Adrenal gland (tissue), 19 donors: ENCODE measurements at regions of chr10 and their contacts with region 1.

Region 1: DNA sequence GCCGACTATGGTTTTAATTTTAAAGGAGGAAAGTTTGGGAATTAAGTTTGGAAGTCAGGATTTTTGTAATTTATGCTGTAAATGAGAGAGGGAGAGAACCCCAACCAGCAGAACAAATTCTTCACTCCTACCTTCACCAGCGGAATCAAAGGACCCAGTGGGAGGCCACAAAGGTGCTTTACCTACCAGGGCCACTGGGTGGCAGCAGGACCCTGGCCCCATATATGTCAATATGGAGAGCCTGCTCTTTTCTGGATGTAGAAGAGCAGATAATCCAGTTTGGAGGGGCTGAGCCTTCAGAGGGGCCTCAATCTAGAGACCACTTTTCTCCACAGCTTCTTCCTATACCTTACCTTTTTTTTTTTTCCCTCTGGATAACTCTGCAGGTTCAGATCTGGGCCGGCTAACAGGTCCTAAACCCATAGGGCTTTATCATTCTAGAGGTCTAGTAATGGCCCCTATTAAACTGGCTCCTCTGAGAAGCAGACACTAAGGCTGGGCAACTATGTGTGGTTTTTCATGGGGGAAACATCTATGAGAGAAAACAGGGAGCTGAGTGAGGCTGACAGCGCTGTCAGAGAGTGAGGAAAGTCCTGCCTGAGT is 8.5 kb upstream of the SCD start:
- DNase-seq: peak; percentile 72 to 92 (median 85)
- H3K4me3 ChIP-seq: no peak overlapping the region
- H3K27ac ChIP-seq: no peak overlapping the region
- H3K4me1 ChIP-seq: peaks cover 0 to 9% of the 10 kb centered on the region in 2 donors
- H3K27me3 ChIP-seq: no peaks in the 10 kb centered on the region
- CTCF ChIP-seq: peak; percentile 82 to 95 (median 92)
- POLR2A ChIP-seq: no peak

Region 2: GRCh38 chr10:100130831-100131230 is 207.7 kb before region 1 on chr10:
- intact Hi-C with region 1: no loop called
- DNase-seq: no peak
- H3K4me3 ChIP-seq: no peak overlapping the region
- H3K27ac ChIP-seq: no peak overlapping the region
- H3K4me1 ChIP-seq: no peaks in the 10 kb centered on the region
- H3K27me3 ChIP-seq: no peaks in the 10 kb centered on the region
- CTCF ChIP-seq: no peak
- POLR2A ChIP-seq: no peak

Region 3: GRCh38 chr10:100518761-100519241 is 180.3 kb after region 1 on chr10:
- intact Hi-C with region 1: loop called (anchors 5 to 10 kb)
- DNase-seq: peak; percentile 55 to 91 (median 76)
- H3K4me3 ChIP-seq: peak overlapping the region in 1 of 4 donors; percentile 48
- H3K27ac ChIP-seq: no peak overlapping the region
- H3K4me1 ChIP-seq: peaks cover 0 to 13% of the 10 kb centered on the region in 2 donors
- H3K27me3 ChIP-seq: no peaks in the 10 kb centered on the region
- CTCF ChIP-seq: peak; percentile 48 to 78 (median 74)
- POLR2A ChIP-seq: no peak

Region 4: GRCh38 chr10:100529475-100530298 is 191.2 kb after region 1 on chr10 and contains the start of gene NDUFB8:
- intact Hi-C with region 1: loop called in 1 of 2 experiments (anchors 10 kb)
- DNase-seq: peak; percentile 89 to 96 (median 91)
- H3K4me3 ChIP-seq: peak within 1 kb of the TSS; percentile 58 to 87 (median 82)
- H3K27ac ChIP-seq: peak within 1 kb of the TSS in 4 of 5 donors; percentile 58 to 86 (median 70)
- H3K4me1 ChIP-seq: peaks cover 18 to 25% of the 10 kb centered on the region in 2 donors
- H3K27me3 ChIP-seq: no peaks in the 10 kb centered on the region
- CTCF ChIP-seq: no peak
- POLR2A ChIP-seq: peak; percentile 53 to 73
- total RNA-seq, gene NDUFB8: 181 to 392 (median 221) TPM

Region 5: DNA sequence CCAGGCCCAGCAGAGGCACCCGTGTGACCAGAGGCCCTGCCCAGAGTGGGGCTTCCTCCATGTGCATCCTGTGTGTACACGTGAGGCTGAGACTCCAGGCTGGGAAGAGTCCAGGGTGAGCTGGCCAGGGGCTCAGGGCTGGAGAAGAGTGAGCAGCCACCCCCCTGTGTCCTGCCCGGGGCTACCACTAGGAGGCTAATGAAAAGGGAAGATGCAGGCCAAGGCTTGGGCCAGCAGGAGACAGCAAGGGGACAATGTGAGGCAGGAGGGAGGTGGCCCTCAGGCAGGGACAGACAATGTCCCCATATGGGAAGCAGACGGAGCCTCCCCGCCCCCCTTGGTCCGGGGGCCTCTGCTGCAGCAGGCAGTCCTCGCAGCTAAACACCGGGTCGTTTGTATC is 299.2 kb after region 1 on chr10:
- intact Hi-C with region 1: no loop called
- DNase-seq: no peak
- H3K4me3 ChIP-seq: no peak overlapping the region
- H3K27ac ChIP-seq: no peak overlapping the region
- H3K4me1 ChIP-seq: no peaks in the 10 kb centered on the region
- H3K27me3 ChIP-seq: peaks cover 41% of the 10 kb centered on the region
- CTCF ChIP-seq: peak in 4 of 6 experiments; percentile 10 to 35 (median 17)
- POLR2A ChIP-seq: no peak